ENCODE measurements at regions of chr2 and their contacts with region 1.

Region 1: GRCh38 chr2:9993488-9994165 is 42.1 kb downstream of the GRHL1 start:
- DNase-seq: no peak
- ATAC-seq: no peak
- H3K4me3 ChIP-seq: no peak overlapping the region
- H3K4me3 Mint-ChIP-seq: no peak overlapping the region
- H3K27ac ChIP-seq: no peak overlapping the region
- H3K27ac Mint-ChIP-seq: no peak overlapping the region
- H3K4me1 ChIP-seq: no peaks in the 10 kb centered on the region
- H3K4me1 Mint-ChIP-seq: peaks cover 0 to 5% (median 0%) of the 10 kb centered on the region in 3 donors
- H3K27me3 ChIP-seq: peaks cover 0 to 6% of the 10 kb centered on the region in 2 experiments
- H3K27me3 Mint-ChIP-seq: no peaks in the 10 kb centered on the region

Region 2: GRCh38 chr2:9638532-9638931 is 355.1 kb before region 1 on chr2:
- CTCF ChIA-PET with region 1: no interaction called
- POLR2A ChIA-PET with region 1: no interaction called
- DNase-seq: no peak
- ATAC-seq: no peak
- H3K4me3 ChIP-seq: no peak overlapping the region
- H3K4me3 Mint-ChIP-seq: no peak overlapping the region
- H3K27ac ChIP-seq: no peak overlapping the region
- H3K27ac Mint-ChIP-seq: no peak overlapping the region
- H3K4me1 ChIP-seq: peaks cover 0 to 9% of the 10 kb centered on the region in 2 experiments
- H3K4me1 Mint-ChIP-seq: peaks cover 0 to 11% (median 8%) of the 10 kb centered on the region in 3 donors
- H3K27me3 ChIP-seq: peaks cover 0 to 4% of the 10 kb centered on the region in 2 experiments
- H3K27me3 Mint-ChIP-seq: peaks cover 0 to 4% of the 10 kb centered on the region in 2 donors

Region 3: DNA sequence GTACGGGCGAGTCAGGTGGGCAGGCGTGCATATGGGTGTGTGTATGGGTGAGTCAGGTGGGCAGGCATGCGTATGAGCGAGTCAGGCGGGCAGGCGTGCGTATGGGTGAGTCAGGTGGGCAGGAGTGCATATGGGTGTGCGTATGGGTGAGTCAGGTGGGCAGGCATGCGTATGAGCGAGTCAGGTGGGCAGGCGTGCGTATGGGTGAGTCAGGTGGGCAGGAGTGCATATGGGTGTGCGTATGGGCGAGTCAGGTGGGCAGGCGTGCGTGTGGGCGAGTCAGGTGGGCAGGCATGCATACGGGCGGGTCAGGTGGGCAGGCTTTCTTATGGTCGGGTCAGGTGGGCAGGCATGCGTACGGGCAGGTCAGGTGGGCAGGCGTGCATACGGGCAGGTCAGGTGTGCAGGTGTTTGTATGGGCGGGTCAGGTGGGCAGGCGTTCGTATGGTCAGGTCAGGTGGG is 20.8 kb after region 1 on chr2:
- CTCF ChIA-PET with region 1: no interaction called
- POLR2A ChIA-PET with region 1: no interaction called
- DNase-seq: no peak
- ATAC-seq: no peak
- H3K4me3 ChIP-seq: no peak overlapping the region
- H3K4me3 Mint-ChIP-seq: no peak overlapping the region
- H3K27ac ChIP-seq: no peak overlapping the region
- H3K27ac Mint-ChIP-seq: no peak overlapping the region
- H3K4me1 ChIP-seq: no peaks in the 10 kb centered on the region
- H3K4me1 Mint-ChIP-seq: no peaks in the 10 kb centered on the region
- H3K27me3 ChIP-seq: peaks cover 0 to 16% of the 10 kb centered on the region in 2 experiments
- H3K27me3 Mint-ChIP-seq: peaks cover 3 to 7% of the 10 kb centered on the region in 2 donors

Region 4: GRCh38 chr2:10028988-10029874 is 35.6 kb after region 1 on chr2:
- CTCF ChIA-PET with region 1: no interaction called
- POLR2A ChIA-PET with region 1: interaction called in 1 of 2 experiments, 13 read pairs
- DNase-seq: peak in 29 of 35 experiments; percentile 16 to 68 (median 52)
- ATAC-seq: peak; percentile 89 to 94 (median 92)
- H3K4me3 ChIP-seq: peak overlapping the region; percentile 15 to 50
- H3K4me3 Mint-ChIP-seq: peak overlapping the region; percentile 39 to 73 (median 54)
- H3K27ac ChIP-seq: peak overlapping the region; percentile 45
- H3K27ac Mint-ChIP-seq: peak overlapping the region; percentile 50 to 69
- H3K4me1 ChIP-seq: peaks cover 16 to 33% of the 10 kb centered on the region in 2 experiments
- H3K4me1 Mint-ChIP-seq: peaks cover 25 to 32% (median 29%) of the 10 kb centered on the region in 3 donors
- H3K27me3 ChIP-seq: peaks cover 0 to 5% of the 10 kb centered on the region in 2 experiments
- H3K27me3 Mint-ChIP-seq: no peaks in the 10 kb centered on the region

Region 5: DNA sequence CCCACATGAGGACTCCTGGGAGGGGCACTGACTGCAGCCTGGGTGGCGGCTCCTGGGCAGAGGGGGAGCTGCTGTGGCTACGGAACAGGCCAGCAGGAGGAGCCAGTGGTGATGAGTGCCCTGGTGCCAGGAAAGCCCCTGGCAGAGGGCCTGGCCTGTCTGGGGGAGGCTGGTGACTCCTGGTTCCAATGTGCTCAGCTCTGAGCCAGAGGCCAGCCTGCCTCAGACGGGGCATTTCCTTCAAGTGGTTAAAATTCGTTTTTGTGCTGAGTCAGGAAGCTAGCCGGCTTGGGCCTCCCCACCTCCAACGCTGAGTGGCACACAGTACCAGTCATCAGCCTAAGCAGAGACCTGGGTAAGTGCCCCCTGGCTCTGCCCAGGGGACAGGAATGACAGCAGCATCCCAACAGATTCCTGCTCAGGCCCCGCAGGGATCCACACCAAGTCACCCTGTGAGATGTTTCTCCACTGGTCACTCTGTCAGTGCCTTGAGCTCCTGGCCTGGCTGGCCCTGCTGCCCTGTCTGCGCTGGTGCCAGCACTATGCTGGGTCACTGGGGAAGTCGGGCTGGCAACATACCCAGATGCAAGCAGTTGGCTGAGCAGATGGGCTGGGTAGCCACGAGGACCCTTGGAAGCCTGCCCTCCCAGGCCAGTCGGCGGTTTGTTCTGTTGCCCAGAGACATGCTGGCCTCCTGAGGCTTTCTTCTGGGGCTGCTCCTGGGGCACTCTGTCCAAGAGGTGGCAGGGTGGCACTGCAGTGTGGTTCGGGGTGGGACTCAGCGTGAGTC is 42.7 kb after region 1 on chr2:
- CTCF ChIA-PET with region 1: no interaction called
- POLR2A ChIA-PET with region 1: interaction called in 1 of 2 experiments, 12 read pairs
- DNase-seq: peak in 27 of 35 experiments; percentile 14 to 73 (median 39)
- ATAC-seq: peak; percentile 55 to 94 (median 59)
- H3K4me3 ChIP-seq: no peak overlapping the region
- H3K4me3 Mint-ChIP-seq: no peak overlapping the region
- H3K27ac ChIP-seq: no peak overlapping the region
- H3K27ac Mint-ChIP-seq: no peak overlapping the region
- H3K4me1 ChIP-seq: peaks cover 0 to 22% of the 10 kb centered on the region in 2 experiments
- H3K4me1 Mint-ChIP-seq: peaks cover 4 to 23% (median 6%) of the 10 kb centered on the region in 3 donors
- H3K27me3 ChIP-seq: peaks cover 0 to 11% of the 10 kb centered on the region in 2 experiments
- H3K27me3 Mint-ChIP-seq: no peaks in the 10 kb centered on the region